ENCODE measurements at regions of chr2 and their contacts with region 1.

Region 1: GRCh38 chr2:36561237-36561944 is 36.6 kb downstream of the FEZ2 start:
- DNase-seq: peak; percentile 66
- H3K4me3 ChIP-seq: no peak overlapping the region
- H3K27ac ChIP-seq: peak overlapping the region; percentile 83
- H3K27me3 ChIP-seq: no peaks in the 10 kb centered on the region
- CTCF ChIP-seq: no peak

Region 2: DNA sequence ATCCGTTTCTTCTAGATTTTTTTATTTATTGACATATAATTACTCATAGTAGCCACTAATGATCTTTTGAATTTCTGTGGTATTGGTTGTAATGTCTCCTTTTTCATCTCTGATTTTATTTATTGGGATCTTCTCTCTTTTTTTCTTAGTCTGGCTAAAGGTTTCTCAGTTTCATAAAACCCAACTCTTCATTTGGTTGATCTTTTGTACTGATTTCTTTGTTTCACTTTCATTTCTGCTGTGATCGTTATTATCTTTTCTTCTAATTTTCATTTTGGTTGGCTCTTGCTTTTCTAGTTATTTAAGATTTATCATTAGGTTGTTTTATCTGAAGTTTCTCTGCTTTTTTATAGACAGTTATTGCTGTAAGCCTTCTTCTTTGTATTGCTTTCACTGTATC is 669.5 kb before region 1 on chr2:
- CTCF ChIA-PET with region 1: interaction called, 10 read pairs
- POLR2A ChIA-PET with region 1: no interaction called
- DNase-seq: no peak
- H3K4me3 ChIP-seq: no peak overlapping the region
- H3K27ac ChIP-seq: no peak overlapping the region
- H3K27me3 ChIP-seq: no peaks in the 10 kb centered on the region
- CTCF ChIP-seq: no peak

Region 3: DNA sequence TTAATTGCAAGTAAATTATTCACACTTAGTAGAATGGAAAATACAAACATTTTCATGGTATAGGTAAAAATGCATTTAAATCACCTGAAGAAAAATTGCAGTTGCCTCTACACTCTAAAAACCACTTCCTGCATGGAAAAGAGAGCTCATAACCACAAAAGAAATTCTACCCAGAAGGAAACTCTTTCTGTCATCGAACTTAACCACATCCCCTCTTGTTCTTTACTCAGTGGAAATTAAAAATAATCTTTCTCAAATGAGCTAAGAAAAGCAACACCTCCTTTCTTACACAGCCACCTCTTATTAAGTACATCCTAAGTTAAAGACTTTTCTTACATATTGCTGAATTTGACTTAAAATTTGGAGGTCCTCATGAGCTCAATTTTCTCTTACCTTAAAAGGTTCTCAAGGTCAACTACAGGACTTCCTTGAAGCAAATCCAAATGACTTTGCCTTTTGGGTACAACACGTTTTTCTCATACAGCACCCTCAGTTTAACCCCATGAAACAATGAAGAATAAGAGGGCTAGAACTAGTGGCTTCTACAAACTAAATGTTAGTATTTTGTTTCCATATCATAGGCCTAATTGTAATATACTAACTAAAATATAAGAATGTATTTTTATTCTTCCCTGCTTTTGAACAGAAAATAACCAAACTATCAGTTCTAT is 314.9 kb before region 1 on chr2:
- CTCF ChIA-PET with region 1: no interaction called
- POLR2A ChIA-PET with region 1: no interaction called
- DNase-seq: no peak
- H3K4me3 ChIP-seq: no peak overlapping the region
- H3K27ac ChIP-seq: no peak overlapping the region
- H3K27me3 ChIP-seq: no peaks in the 10 kb centered on the region
- CTCF ChIP-seq: no peak

Measured in AG04450 (cell line).